Activated CD4-positive, alpha-beta memory T cell treated with anti-CD3 and anti-CD28 coated beads for 36 hours (primary cell): ENCODE measurements at regions of chr1 and their contacts with region 1.

Region 1: DNA sequence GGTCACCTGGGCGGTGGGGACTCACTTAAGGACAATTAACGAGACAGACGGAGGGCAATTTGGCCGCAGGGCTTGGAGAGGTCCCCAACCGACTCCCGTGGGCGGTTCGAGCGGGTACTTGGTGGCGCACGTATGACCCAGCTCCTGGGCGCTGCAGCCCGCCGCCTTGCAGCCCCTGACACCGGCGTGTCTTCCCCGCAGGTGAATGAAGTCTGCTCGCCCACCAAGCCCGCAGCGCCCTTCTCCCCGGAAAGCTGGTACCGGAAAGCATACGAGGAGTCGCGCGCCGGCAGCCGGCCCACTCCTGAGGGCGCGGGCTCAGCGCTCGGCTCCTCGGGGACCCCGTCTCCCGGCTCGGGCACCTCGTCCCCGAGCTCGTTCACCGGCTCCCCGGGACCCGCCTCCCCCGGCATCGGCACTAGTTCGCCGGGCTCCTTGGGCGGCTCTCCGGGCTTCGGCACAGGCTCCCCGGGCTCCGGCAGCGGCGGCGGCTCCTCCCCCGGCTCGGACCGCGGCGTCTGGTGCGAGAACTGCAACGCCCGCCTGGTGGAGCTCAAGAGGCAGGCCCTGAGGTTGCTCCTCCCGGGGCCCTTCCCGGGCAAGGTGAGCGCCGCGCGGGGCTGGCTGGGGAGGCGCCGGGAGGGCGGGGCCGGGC is 1.4 kb downstream of the KIF26B start:
- DNase-seq: peak; percentile 89
- H3K4me3 Mint-ChIP-seq: peak overlapping the region; percentile 56
- H3K27ac Mint-ChIP-seq: no peak overlapping the region
- H3K4me1 Mint-ChIP-seq: peaks cover 22% of the 10 kb centered on the region
- H3K27me3 Mint-ChIP-seq: peaks cover 55% of the 10 kb centered on the region

Region 2: DNA sequence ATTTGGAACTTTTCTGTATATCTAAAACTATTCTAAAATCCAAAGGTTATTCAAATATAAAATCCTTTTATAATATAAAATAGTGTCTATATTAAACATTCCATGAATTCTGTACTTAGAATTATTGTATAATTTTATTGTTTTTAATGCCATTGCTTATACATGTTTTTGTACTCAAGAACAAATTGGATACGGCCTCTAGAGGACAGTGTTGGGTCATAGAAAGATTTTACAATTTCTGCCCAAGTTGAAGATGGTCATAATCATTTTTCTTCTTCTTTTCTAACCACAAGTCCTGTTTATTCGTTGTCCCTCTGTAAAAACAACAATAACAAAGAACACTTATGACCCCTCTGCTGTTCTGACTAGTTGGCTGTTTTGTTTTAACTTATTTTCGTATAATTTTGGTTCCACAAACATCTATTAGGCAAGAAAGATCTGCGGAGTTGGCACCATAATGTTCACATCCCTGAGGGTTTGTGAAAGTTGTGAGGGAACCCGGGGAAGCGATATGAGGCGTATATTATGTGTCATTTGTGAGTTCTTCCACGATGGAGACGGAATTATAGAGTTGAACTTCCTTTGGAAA is 77.1 kb before region 1 on chr1:
- CTCF ChIA-PET with region 1: interaction called, 3 read pairs
- POLR2A ChIA-PET with region 1: no interaction called
- intact Hi-C with region 1: loop called (anchors 1 kb)
- DNase-seq: no peak
- H3K4me3 Mint-ChIP-seq: no peak overlapping the region
- H3K27ac Mint-ChIP-seq: no peak overlapping the region
- H3K4me1 Mint-ChIP-seq: no peaks in the 10 kb centered on the region
- H3K27me3 Mint-ChIP-seq: peaks cover 2% of the 10 kb centered on the region

Region 3: DNA sequence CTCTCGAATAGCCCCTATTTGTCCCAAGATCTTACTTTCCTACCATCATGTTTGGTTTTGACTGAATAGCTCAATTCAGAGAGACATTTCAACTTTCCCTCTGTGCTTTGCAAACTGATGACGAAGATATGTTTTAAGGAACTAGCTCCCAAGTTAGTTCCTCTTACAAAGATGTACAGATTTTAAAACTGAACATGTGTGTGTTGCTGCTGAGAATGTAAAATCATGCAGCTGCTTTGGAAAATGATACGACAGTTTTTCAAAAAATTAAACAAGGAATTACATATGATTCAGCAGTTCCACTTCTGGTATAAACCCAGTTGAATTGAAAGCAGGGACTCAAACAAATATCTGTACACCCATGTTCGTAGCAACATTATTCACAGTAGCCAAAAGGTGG is 32.2 kb after region 1 on chr1:
- CTCF ChIA-PET with region 1: no interaction called
- POLR2A ChIA-PET with region 1: no interaction called
- intact Hi-C with region 1: no loop called
- DNase-seq: no peak
- H3K4me3 Mint-ChIP-seq: no peak overlapping the region
- H3K27ac Mint-ChIP-seq: no peak overlapping the region
- H3K4me1 Mint-ChIP-seq: no peaks in the 10 kb centered on the region
- H3K27me3 Mint-ChIP-seq: peaks cover 3% of the 10 kb centered on the region

Region 4: GRCh38 chr1:245248231-245248731 is 92.1 kb after region 1 on chr1:
- CTCF ChIA-PET with region 1: no interaction called
- POLR2A ChIA-PET with region 1: no interaction called
- intact Hi-C with region 1: no loop called
- DNase-seq: no peak
- H3K4me3 Mint-ChIP-seq: no peak overlapping the region
- H3K27ac Mint-ChIP-seq: no peak overlapping the region
- H3K4me1 Mint-ChIP-seq: no peaks in the 10 kb centered on the region
- H3K27me3 Mint-ChIP-seq: no peaks in the 10 kb centered on the region

Region 5: GRCh38 chr1:245277276-245277675 is 121.1 kb after region 1 on chr1:
- CTCF ChIA-PET with region 1: no interaction called
- POLR2A ChIA-PET with region 1: no interaction called
- intact Hi-C with region 1: loop called (anchors 10 kb)
- DNase-seq: no peak
- H3K4me3 Mint-ChIP-seq: no peak overlapping the region
- H3K27ac Mint-ChIP-seq: no peak overlapping the region
- H3K4me1 Mint-ChIP-seq: no peaks in the 10 kb centered on the region
- H3K27me3 Mint-ChIP-seq: peaks cover 14% of the 10 kb centered on the region

Region 6: GRCh38 chr1:245888809-245889208 is 732.6 kb after region 1 on chr1:
- CTCF ChIA-PET with region 1: interaction called, 4 read pairs
- POLR2A ChIA-PET with region 1: no interaction called
- intact Hi-C with region 1: loop called (anchors 10 kb)
- DNase-seq: no peak
- H3K4me3 Mint-ChIP-seq: no peak overlapping the region
- H3K27ac Mint-ChIP-seq: no peak overlapping the region
- H3K4me1 Mint-ChIP-seq: no peaks in the 10 kb centered on the region
- H3K27me3 Mint-ChIP-seq: no peaks in the 10 kb centered on the region

Region 7: DNA sequence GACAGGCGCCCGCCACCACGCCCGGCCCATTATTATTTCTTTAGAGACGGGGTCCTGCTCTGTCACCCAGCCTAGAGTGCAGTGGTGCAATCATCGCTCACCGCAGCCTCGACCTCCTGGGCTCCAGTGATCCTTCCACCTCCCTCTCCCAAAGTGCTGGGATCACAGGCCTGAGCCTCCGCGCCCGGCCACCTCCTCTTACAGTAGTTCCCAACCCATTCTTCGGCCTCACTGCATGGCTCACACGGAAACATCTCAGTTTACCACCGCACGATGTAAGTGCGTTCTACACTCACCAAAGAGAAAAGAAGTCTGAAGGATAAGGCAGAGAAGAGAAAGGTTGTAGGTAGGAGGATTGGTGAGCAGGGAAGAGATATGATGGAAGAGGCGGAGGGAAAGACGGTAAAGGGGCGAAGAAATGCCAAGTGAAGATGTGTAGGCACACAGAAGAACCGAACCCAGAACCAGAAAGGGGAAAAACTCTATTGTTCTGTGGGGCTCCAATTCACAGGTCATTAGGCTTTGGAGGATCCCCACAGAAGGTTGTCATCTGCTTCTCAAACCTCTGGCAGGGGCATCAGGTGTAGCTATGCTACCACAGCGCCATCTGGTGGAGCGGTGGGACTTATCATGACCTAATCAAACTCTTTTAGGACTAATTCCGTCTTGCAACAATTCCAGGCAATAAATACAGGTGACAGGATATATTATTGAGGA is 846.7 kb after region 1 on chr1:
- CTCF ChIA-PET with region 1: interaction called, 29 read pairs
- POLR2A ChIA-PET with region 1: no interaction called
- intact Hi-C with region 1: loop called (anchors 1 kb)
- DNase-seq: peak; percentile 87
- H3K4me3 Mint-ChIP-seq: no peak overlapping the region
- H3K27ac Mint-ChIP-seq: no peak overlapping the region
- H3K4me1 Mint-ChIP-seq: no peaks in the 10 kb centered on the region
- H3K27me3 Mint-ChIP-seq: no peaks in the 10 kb centered on the region

Region 8: GRCh38 chr1:246450611-246451251 is 1294.5 kb after region 1 on chr1:
- CTCF ChIA-PET with region 1: interaction called, 7 read pairs
- POLR2A ChIA-PET with region 1: no interaction called
- intact Hi-C with region 1: loop called (anchors 5 kb)
- DNase-seq: no peak
- H3K4me3 Mint-ChIP-seq: no peak overlapping the region
- H3K27ac Mint-ChIP-seq: no peak overlapping the region
- H3K4me1 Mint-ChIP-seq: peaks cover 2% of the 10 kb centered on the region
- H3K27me3 Mint-ChIP-seq: no peaks in the 10 kb centered on the region